Tibial artery (tissue), 4 donors: ENCODE measurements at regions of chr16 and their contacts with region 1.

Region 1: DNA sequence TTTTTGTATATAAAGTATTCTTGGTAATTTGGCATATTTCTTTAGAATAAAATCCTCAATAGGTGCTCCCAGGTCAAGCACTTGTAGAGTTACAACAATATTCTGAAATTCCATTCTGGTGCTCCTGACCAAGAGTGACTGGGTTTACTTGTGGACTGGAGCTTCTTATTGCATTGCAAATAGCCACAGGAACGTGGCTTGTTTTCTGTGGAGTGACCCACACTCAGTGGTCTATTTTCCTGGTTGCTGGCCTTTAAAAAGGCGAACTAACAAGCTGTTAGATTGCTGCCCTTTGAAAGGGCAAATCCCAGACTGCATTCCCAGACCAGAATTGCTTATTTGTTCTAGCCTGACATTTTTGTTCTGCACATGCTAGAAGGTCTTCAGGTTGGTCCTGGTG is 658.8 kb upstream of the GOT2 start:
- DNase-seq: no peak
- H3K4me3 ChIP-seq: no peak overlapping the region
- H3K27ac ChIP-seq: no peak overlapping the region
- H3K4me1 ChIP-seq: no peaks in the 10 kb centered on the region
- H3K27me3 ChIP-seq: no peaks in the 10 kb centered on the region
- CTCF ChIP-seq: no peak

Region 2: GRCh38 chr16:59108374-59108773 is 284.5 kb before region 1 on chr16:
- intact Hi-C with region 1: no loop called
- DNase-seq: no peak
- H3K4me3 ChIP-seq: no peak overlapping the region
- H3K27ac ChIP-seq: no peak overlapping the region
- H3K4me1 ChIP-seq: no peaks in the 10 kb centered on the region
- H3K27me3 ChIP-seq: no peaks in the 10 kb centered on the region
- CTCF ChIP-seq: no peak

Region 3: GRCh38 chr16:59527206-59527997 is 134.5 kb after region 1 on chr16:
- intact Hi-C with region 1: loop called (anchors 5 kb)
- DNase-seq: no peak
- H3K4me3 ChIP-seq: no peak overlapping the region
- H3K27ac ChIP-seq: no peak overlapping the region
- H3K4me1 ChIP-seq: no peaks in the 10 kb centered on the region
- H3K27me3 ChIP-seq: no peaks in the 10 kb centered on the region
- CTCF ChIP-seq: no peak